SK-N-SH (cell line): ENCODE measurements at regions of chr6 and their contacts with region 1.

Region 1: DNA sequence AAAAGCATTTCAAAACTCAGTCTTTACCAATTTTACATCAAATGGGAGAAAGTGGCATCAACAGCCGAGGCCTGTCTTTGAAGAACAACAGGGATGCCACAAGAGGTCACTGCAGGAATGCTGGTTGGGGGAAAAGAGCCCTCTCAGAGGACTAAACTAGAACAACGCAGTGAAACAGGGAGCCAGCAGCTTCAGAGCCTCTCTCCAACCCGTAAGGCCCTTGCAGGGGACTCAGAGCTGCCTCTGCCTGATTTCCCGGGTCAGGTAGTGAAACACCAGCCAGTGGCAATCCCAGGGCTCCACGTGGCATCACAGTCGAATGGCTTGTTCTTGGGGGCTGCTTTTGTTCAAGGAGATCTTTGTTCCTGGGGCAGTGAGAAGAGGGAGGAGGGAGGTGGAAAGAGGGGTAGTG is 55.0 kb upstream of the KCNK16 start:
- DNase-seq: peak; percentile 79
- H3K4me3 ChIP-seq: no peak overlapping the region
- H3K27ac ChIP-seq: no peak overlapping the region
- H3K4me1 ChIP-seq: peaks cover 0 to 2% of the 10 kb centered on the region in 2 experiments; a peak in 1 of 4 replicates
- H3K27me3 ChIP-seq: no peaks in the 10 kb centered on the region
- CTCF ChIP-seq: peak; percentile 63
- EP300 ChIP-seq: no peak
- RAD21 ChIP-seq: peak; percentile 99

Region 2: GRCh38 chr6:39389484-39389767 is 11.9 kb after region 1 on chr6:
- CTCF ChIA-PET with region 1: interaction called, 28 read pairs
- POLR2A ChIA-PET with region 1: no interaction called
- DNase-seq: peak; percentile 48
- H3K4me3 ChIP-seq: no peak overlapping the region
- H3K27ac ChIP-seq: no peak overlapping the region
- H3K4me1 ChIP-seq: peaks cover 0 to 16% of the 10 kb centered on the region in 2 experiments; a peak in 1 of 4 replicates
- H3K27me3 ChIP-seq: no peaks in the 10 kb centered on the region
- CTCF ChIP-seq: peak; percentile 21
- EP300 ChIP-seq: no peak
- RAD21 ChIP-seq: peak; percentile 66

Region 3: DNA sequence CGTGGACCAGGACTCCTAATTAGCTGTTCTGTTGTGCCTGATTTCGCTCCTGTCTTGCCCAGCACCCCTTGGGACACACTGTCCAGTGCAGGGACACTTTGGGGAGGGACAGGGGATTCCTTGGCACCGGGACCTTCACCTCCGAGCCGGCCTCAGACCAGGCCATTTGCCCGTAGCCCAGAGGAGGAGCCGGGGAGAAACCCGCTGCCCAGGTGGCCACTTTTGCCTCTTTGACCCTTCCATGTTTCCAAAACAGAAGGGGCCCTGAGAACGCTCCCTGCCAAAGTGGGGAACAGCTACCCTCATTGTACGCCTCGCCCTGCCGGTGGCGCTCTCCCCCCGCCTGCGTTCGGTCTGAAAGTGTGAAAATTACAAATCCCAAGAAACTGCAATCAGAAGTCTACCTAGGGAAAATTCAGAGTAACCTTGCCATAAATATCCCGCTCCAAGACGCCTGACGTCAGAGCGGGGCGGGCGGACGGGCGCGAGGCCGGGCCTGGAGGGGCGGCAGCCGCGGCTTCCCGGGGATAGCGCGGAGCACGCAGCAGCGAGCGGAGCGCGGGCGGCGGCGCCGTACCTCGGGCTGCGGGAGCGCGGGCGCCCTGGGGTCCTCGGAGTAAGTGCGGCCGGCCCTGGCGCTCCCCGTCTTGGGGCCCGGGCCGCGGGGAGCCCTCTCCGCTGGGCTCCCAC is 414.4 kb after region 1 on chr6 and contains the start of gene DAAM2:
- CTCF ChIA-PET with region 1: interaction called, 11 read pairs
- POLR2A ChIA-PET with region 1: no interaction called
- DNase-seq: peak; percentile 81
- H3K4me3 ChIP-seq: peak within 1 kb of the TSS; percentile 48 to 60
- H3K27ac ChIP-seq: no peak within 1 kb of the TSS; a peak in 1 of 4 replicates
- H3K4me1 ChIP-seq: peaks cover 0 to 15% of the 10 kb centered on the region in 2 experiments; a peak in 2 of 4 replicates
- H3K27me3 ChIP-seq: peaks cover 5% of the 10 kb centered on the region
- CTCF ChIP-seq: no peak
- EP300 ChIP-seq: no peak
- RAD21 ChIP-seq: 0 out of 2 replicates have a peak, but pooled peaks have one; percentile 13
- polyA plus RNA-seq, gene DAAM2: 0.20 and 0.23 TPM in 2 replicates

Region 4: DNA sequence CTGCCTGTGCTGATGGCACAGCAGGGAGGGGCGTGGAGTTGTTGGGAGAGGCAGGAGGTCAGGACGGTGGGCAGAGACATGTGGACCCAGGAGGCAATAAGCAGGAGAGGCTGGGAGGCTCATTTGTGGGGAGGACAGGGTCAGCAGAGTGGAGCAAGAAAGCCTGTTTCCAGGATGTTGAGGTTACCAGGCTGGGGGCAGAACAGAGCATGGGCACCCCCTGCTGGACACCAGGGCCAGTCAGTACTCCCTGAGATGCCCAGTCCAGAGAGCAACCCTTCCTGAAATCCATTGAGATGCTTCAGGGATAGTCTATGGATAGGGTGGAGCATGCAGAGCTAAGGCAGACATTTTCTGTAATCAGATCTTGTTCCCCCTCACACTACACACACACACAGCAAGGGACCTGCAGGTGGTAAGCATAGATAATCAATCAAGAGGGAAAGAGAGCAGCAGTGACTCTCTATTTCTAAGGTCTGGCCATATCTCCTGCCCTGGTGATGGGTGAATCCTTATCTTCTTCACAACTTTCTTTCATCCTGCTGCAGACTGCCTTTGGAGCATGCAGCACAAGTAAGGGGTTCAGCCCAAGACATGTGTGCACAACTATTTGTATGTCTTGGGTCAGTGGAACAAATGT is 515.1 kb after region 1 on chr6:
- CTCF ChIA-PET with region 1: interaction called, 69 read pairs
- POLR2A ChIA-PET with region 1: no interaction called
- DNase-seq: peak; percentile 85
- H3K4me3 ChIP-seq: no peak overlapping the region
- H3K27ac ChIP-seq: no peak overlapping the region
- H3K4me1 ChIP-seq: peaks cover 0 to 7% of the 10 kb centered on the region in 2 experiments; a peak in 1 of 4 replicates
- H3K27me3 ChIP-seq: no peaks in the 10 kb centered on the region
- CTCF ChIP-seq: peak; percentile 72
- EP300 ChIP-seq: no peak
- RAD21 ChIP-seq: peak; percentile 89